ENCODE measurements at regions of chr3 and their contacts with region 1.

Region 1: DNA sequence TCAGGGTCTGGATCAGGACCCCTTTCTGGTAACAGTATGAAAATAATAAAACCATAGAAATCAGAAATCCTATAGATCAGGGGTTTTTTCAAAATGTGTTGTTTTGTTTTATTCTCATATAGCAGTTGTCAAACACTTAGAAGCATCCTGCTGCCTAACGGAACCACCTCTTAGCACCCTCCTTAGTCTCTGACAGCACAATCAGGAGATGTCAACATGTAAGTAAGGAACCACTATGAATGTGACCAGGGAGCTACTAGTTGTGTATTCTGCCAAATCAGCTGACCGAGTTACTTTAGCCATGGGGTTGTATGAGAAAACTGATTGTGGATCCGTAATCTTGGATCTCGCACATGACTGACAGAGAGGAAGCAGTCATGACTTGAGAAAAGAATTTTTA is 22.2 kb downstream of the CCDC39 start:
- DNase-seq: no peak
- H3K4me3 ChIP-seq: no peak overlapping the region
- H3K27ac ChIP-seq: no peak overlapping the region
- H3K4me1 ChIP-seq: no peaks in the 10 kb centered on the region
- H3K27me3 ChIP-seq: no peaks in the 10 kb centered on the region
- CTCF ChIP-seq: no peak

Region 2: GRCh38 chr3:180523040-180523439 is 134.1 kb before region 1 on chr3:
- CTCF ChIA-PET with region 1: no interaction called
- POLR2A ChIA-PET with region 1: no interaction called
- intact Hi-C with region 1: no loop called
- DNase-seq: no peak
- H3K4me3 ChIP-seq: no peak overlapping the region
- H3K27ac ChIP-seq: no peak overlapping the region
- H3K4me1 ChIP-seq: no peaks in the 10 kb centered on the region
- H3K27me3 ChIP-seq: no peaks in the 10 kb centered on the region
- CTCF ChIP-seq: no peak

Region 3: GRCh38 chr3:181486141-181486885 is 829.2 kb after region 1 on chr3:
- CTCF ChIA-PET with region 1: no interaction called
- POLR2A ChIA-PET with region 1: no interaction called
- intact Hi-C with region 1: no loop called
- DNase-seq: no peak
- H3K4me3 ChIP-seq: no peak overlapping the region
- H3K27ac ChIP-seq: no peak overlapping the region
- H3K4me1 ChIP-seq: no peaks in the 10 kb centered on the region
- H3K27me3 ChIP-seq: no peaks in the 10 kb centered on the region
- CTCF ChIP-seq: no peak

Region 4: DNA sequence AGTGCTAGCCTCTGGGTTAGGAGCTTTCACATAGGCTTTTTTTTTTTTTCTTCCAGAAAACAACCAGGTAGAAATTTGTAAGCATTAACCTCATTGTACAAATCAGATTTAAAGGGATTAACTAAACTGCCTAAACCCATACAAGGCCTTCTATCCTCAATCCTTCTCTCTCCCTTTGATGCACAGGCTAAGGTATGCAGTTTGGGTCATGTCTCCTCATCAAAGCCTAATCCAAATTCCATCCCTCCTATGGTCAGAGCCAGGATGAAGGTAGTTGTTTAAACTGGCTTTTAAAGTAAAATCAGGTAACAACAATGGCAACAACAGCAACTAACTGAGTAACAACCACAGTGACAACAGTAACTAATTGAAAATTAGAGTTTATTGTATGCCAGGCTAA is 939.0 kb after region 1 on chr3:
- CTCF ChIA-PET with region 1: interaction called, 11 read pairs
- POLR2A ChIA-PET with region 1: no interaction called
- intact Hi-C with region 1: no loop called
- DNase-seq: no peak
- H3K4me3 ChIP-seq: no peak overlapping the region
- H3K27ac ChIP-seq: no peak overlapping the region
- H3K4me1 ChIP-seq: no peaks in the 10 kb centered on the region
- H3K27me3 ChIP-seq: no peaks in the 10 kb centered on the region
- CTCF ChIP-seq: no peak